ENCODE measurements at regions of chr17 and their contacts with region 1.

Region 1: DNA sequence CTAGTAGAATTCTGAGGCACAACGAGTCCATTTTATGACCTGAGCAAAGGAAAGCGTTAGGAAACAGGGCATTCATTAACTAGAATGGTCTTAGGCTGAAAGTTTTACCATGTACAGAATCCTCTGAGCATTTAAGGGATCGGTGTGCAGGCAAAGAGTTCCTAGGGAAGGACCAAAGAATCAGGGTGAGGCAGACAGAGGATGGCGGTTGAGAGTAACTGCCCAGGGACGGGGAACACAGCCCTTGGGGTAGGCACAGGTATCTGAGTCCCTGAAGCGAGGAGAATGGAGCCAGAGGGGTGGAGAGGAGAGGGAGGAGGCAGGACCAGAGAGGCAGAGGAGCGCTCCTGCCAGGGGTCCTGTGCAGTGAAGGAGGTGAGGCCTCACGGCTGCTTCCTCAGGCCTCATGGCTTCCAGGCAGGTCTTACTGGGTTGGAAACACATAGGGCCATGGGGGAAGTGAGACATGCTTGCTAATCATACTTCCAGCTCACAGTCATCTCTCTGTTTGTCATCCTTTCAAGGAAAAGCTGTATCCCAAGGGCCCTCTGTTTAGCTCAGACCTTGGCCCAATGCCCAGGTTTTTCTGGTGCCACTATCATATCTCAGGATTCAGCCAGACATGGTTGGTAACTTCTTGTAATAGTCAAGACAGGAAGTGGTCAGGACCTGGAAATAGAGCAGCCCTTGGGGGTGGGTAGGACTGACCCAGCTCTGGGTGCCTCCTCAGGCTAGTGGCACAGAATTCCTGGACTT is 13.8 kb upstream of the ITGB3 start:
- DNase-seq: peak; percentile 79 to 84
- ATAC-seq: peak; percentile 87 to 97 (median 92)
- H3K4me3 ChIP-seq: no peak overlapping the region
- H3K27ac ChIP-seq: peak overlapping the region; percentile 79
- H3K4me1 ChIP-seq: peaks cover 13% of the 10 kb centered on the region
- H3K27me3 ChIP-seq: no peaks in the 10 kb centered on the region
- CTCF ChIP-seq: no peak

Region 2: GRCh38 chr17:47295062-47295845 is 55.5 kb after region 1 on chr17:
- intact Hi-C with region 1: loop called in 1 of 2 experiments (anchors 5 kb)
- DNase-seq: no peak
- ATAC-seq: no peak
- H3K4me3 ChIP-seq: no peak overlapping the region
- H3K27ac ChIP-seq: no peak overlapping the region
- H3K4me1 ChIP-seq: no peaks in the 10 kb centered on the region
- H3K27me3 ChIP-seq: no peaks in the 10 kb centered on the region
- CTCF ChIP-seq: no peak